MCF 10A (cell line): ENCODE measurements at regions of chr13 and their contacts with region 1.

Region 1: DNA sequence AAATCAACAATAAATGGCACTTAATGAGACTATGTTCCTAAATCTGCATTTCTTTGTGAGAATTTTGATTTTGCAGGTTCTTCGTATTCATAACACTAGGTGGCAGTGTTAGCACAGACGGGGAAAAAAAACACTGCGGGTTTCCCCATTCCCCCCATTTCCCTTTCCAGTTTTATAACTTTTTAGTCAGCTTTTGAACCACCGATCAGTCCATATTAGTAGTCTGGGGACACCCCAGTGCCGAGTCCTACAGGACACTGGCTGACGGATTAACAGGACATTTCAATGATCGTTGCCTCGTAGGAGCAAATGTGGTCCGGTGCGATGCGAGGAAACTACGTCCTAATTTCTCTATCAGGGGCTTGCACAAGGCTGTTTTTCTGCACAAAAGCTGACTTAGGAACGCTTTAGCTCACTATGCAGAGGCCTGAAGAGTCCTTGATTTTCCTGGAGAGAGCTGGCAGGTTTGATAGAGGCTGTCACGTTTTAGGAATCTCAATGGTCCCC is 234.3 kb downstream of the LMO7 start:
- DNase-seq: peak; percentile 30
- H3K4me3 Mint-ChIP-seq: peak overlapping the region; percentile 77
- H3K27ac Mint-ChIP-seq: no peak overlapping the region
- H3K4me1 Mint-ChIP-seq: no peaks in the 10 kb centered on the region
- H3K27me3 Mint-ChIP-seq: no peaks in the 10 kb centered on the region
- CTCF ChIP-seq: peak; percentile 62

Region 2: GRCh38 chr13:74966814-74967424 is 903.5 kb before region 1 on chr13:
- CTCF ChIA-PET with region 1: no interaction called
- POLR2A ChIA-PET with region 1: no interaction called
- intact Hi-C with region 1: no loop called
- DNase-seq: no peak
- H3K4me3 Mint-ChIP-seq: no peak overlapping the region
- H3K27ac Mint-ChIP-seq: no peak overlapping the region
- H3K4me1 Mint-ChIP-seq: no peaks in the 10 kb centered on the region
- H3K27me3 Mint-ChIP-seq: no peaks in the 10 kb centered on the region
- CTCF ChIP-seq: no peak

Region 3: GRCh38 chr13:75687150-75687763 is 183.2 kb before region 1 on chr13:
- CTCF ChIA-PET with region 1: interaction called, 46 read pairs
- POLR2A ChIA-PET with region 1: interaction called, 4 read pairs
- intact Hi-C with region 1: no loop called
- DNase-seq: peak; percentile 59
- H3K4me3 Mint-ChIP-seq: no peak overlapping the region
- H3K27ac Mint-ChIP-seq: no peak overlapping the region
- H3K4me1 Mint-ChIP-seq: peaks cover 18% of the 10 kb centered on the region
- H3K27me3 Mint-ChIP-seq: no peaks in the 10 kb centered on the region
- CTCF ChIP-seq: peak; percentile 49

Region 4: DNA sequence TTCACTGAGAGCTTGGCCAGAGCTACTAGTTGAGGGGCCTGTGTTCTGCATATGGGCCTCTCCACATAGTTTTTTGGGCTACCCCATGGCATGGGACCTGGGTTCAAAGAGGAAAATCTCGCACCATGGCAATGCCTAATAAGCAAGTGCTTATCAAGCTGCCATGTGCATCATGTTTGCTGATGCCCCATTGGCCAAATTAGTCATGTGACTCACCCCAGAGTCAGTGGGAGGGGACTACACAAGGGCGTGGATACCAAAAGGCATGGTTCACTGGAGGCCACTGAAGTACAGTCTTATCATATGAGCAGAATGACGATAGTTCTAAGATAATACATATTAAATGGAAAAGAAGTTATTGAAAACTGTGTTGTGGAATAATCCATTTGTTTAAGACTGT is 19.5 kb before region 1 on chr13:
- CTCF ChIA-PET with region 1: interaction called, 44 read pairs
- POLR2A ChIA-PET with region 1: interaction called, 4 read pairs
- intact Hi-C with region 1: no loop called
- DNase-seq: no peak
- H3K4me3 Mint-ChIP-seq: no peak overlapping the region
- H3K27ac Mint-ChIP-seq: no peak overlapping the region
- H3K4me1 Mint-ChIP-seq: no peaks in the 10 kb centered on the region
- H3K27me3 Mint-ChIP-seq: no peaks in the 10 kb centered on the region
- CTCF ChIP-seq: no peak

Region 5: DNA sequence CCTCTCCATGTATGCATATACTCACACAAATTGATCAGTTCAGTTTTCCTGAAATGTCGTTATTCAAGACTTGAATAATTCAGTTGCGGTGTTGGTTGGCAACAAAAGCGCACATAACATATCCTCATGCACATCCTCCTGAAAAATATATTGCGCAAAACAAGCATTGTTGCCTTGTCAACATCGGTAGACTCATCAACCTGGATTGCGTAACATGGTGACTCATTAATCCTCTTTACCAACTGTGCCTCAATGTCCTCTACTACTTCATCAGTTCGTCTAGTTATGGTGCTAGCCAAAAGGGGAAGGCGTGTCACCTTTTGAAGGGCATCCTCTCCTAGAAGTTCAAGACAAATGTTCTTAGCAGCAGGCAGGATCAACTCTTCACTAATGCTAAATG is 123.4 kb after region 1 on chr13:
- CTCF ChIA-PET with region 1: no interaction called
- POLR2A ChIA-PET with region 1: no interaction called
- intact Hi-C with region 1: no loop called
- DNase-seq: peak; percentile 97
- H3K4me3 Mint-ChIP-seq: no peak overlapping the region
- H3K27ac Mint-ChIP-seq: no peak overlapping the region
- H3K4me1 Mint-ChIP-seq: no peaks in the 10 kb centered on the region
- H3K27me3 Mint-ChIP-seq: no peaks in the 10 kb centered on the region
- CTCF ChIP-seq: no peak

Region 6: GRCh38 chr13:76894401-76895110 is 1024.1 kb after region 1 on chr13:
- CTCF ChIA-PET with region 1: interaction called, 13 read pairs
- POLR2A ChIA-PET with region 1: interaction called, 3 read pairs
- intact Hi-C with region 1: loop called (anchors 5 kb)
- DNase-seq: peak; percentile 24
- H3K4me3 Mint-ChIP-seq: no peak overlapping the region
- H3K27ac Mint-ChIP-seq: no peak overlapping the region
- H3K4me1 Mint-ChIP-seq: peaks cover 14% of the 10 kb centered on the region
- H3K27me3 Mint-ChIP-seq: no peaks in the 10 kb centered on the region
- CTCF ChIP-seq: no peak

Region 7: DNA sequence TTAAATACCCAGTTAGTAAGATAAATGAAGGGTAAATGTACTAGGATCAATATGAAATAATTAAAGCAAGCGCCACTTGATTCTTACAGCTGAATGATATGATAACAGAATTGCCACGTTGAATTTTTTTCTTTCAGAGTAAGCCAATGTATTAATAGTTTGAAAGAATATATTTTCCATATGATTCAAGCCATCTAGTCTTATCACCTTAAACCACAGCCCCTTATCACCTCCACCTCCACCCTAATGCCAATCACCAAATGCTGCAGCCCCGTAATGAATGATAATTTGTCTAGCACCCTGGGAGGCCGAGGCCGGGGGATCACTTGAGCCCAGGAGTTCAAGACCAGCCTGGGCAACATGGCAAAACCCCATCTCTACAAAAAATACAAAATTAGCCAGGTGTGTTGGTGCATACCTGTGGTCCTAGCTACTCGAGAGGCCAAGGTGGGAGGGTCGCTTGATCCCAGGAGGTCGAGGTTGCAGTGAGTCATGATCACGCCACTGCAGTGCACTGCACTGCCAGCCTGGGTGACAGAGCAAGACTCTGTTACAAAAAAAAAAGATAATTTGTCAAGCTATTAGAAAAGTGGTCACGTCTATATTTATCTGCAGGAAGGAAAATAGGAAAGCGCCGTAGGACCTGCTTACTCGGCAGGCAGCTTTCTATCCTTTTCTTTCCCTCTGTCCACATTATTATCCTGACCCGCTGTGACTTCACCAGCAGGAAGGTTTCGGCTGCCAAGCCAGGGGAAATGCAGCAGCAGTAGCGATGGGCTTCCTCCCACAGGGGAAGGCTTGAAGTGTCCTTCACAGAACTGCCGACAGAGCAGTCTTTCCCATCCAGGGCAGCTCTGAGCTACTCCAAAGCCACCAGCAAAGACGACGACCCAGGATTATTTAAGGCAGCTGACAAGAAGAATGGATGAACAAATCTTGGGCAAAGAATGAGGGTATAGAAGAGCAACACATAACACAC is 1101.7 kb after region 1 on chr13:
- CTCF ChIA-PET with region 1: interaction called, 11 read pairs
- POLR2A ChIA-PET with region 1: no interaction called
- intact Hi-C with region 1: no loop called
- DNase-seq: no peak
- H3K4me3 Mint-ChIP-seq: no peak overlapping the region
- H3K27ac Mint-ChIP-seq: no peak overlapping the region
- H3K4me1 Mint-ChIP-seq: peaks cover 21% of the 10 kb centered on the region
- H3K27me3 Mint-ChIP-seq: no peaks in the 10 kb centered on the region
- CTCF ChIP-seq: no peak

Region 8: GRCh38 chr13:77002590-77003190 is 1132.2 kb after region 1 on chr13:
- CTCF ChIA-PET with region 1: interaction called, 15 read pairs
- POLR2A ChIA-PET with region 1: no interaction called
- intact Hi-C with region 1: no loop called
- DNase-seq: peak; percentile 49
- H3K4me3 Mint-ChIP-seq: no peak overlapping the region
- H3K27ac Mint-ChIP-seq: peak overlapping the region; percentile 69
- H3K4me1 Mint-ChIP-seq: peaks cover 6% of the 10 kb centered on the region
- H3K27me3 Mint-ChIP-seq: no peaks in the 10 kb centered on the region
- CTCF ChIP-seq: peak; percentile 55